Mammary epithelial cell (primary cell): ENCODE measurements at regions of chr4 and their contacts with region 1.

Region 1: GRCh38 chr4:153573881-153574802 is 108.0 kb downstream of the TMEM131L start:
- DNase-seq: peak; percentile 61
- H3K4me3 ChIP-seq: no peak overlapping the region
- H3K27ac ChIP-seq: no peak overlapping the region
- H3K4me1 ChIP-seq: peaks cover 6% of the 10 kb centered on the region
- H3K27me3 ChIP-seq: no peaks in the 10 kb centered on the region
- CTCF ChIP-seq: peak; percentile 53 to 69

Region 2: GRCh38 chr4:153432968-153433753 is 141.0 kb before region 1 on chr4:
- CTCF ChIA-PET with region 1: interaction called, 12 read pairs
- dilution Hi-C with region 1: no loop called
- in situ Hi-C with region 1: loop called in 1 of 2 experiments (anchors 10 kb)
- intact Hi-C with region 1: loop called (anchors 1 kb)
- DNase-seq: peak; percentile 94
- H3K4me3 ChIP-seq: no peak overlapping the region
- H3K27ac ChIP-seq: peak overlapping the region; percentile 52
- H3K4me1 ChIP-seq: peaks cover 11% of the 10 kb centered on the region
- H3K27me3 ChIP-seq: no peaks in the 10 kb centered on the region
- CTCF ChIP-seq: peak; percentile 75 to 84

Region 3: GRCh38 chr4:153448003-153448731 is 126.0 kb before region 1 on chr4:
- CTCF ChIA-PET with region 1: no interaction called
- dilution Hi-C with region 1: no loop called
- in situ Hi-C with region 1: loop called in 1 of 2 experiments (anchors 10 kb)
- intact Hi-C with region 1: no loop called
- DNase-seq: no peak
- H3K4me3 ChIP-seq: no peak overlapping the region
- H3K27ac ChIP-seq: no peak overlapping the region
- H3K4me1 ChIP-seq: peaks cover 6% of the 10 kb centered on the region
- H3K27me3 ChIP-seq: no peaks in the 10 kb centered on the region
- CTCF ChIP-seq: no peak